Heart right ventricle (tissue), 16 donors: ENCODE measurements at regions of chr6 and their contacts with region 1.

Region 1: DNA sequence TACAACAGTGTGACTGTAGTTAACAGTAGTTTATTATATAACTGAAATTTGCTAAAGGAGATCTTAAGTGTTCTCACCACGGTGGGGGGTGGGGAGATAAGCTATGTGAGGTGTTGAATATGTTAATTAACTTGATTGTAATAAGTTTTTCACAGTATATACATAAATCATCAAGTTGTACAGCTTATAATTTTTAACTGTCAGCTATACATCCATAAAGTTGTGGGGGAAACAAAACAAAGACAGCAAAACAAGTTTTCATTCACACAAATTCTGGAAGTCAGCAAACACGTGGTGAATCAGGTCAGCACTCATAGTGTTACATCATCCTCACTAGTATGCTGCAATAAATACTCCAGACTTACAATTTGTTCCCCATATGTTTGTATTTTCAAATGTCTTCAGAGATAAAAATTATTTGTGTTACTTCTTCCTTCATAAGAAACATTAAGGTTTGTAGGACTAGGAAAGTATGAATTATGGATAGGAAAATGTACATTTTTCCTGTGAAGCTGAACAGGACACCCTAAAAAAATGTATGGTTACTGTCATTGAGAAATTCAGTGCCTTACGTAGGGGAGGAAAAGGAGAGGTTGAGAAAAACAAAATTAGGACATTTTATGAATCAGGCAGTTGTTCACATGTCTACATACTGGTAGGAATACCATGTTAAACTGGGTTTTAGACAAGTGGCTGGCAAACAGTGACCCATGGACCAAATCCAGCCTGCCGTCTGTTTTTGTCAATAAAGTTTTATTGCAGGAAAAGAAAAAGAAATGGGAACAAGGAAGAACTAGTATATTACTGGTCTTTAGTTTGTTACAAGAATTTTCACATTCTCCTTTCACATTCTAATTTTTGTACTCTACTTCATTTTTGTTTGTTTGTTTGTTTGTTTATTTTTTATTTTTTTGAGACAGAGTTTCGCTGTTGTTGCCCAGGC is 6.0 kb downstream of the SUMO4 start:
- DNase-seq: no peak
- ATAC-seq: no peak
- H3K4me3 ChIP-seq: no peak overlapping the region
- H3K27ac ChIP-seq: peak overlapping the region in 1 of 10 donors; percentile 3
- H3K4me1 ChIP-seq: peaks cover 0 to 20% (median 6%) of the 10 kb centered on the region in 9 donors
- H3K27me3 ChIP-seq: no peaks in the 10 kb centered on the region
- CTCF ChIP-seq: no peak

Region 2: GRCh38 chr6:149190224-149190831 is 215.8 kb before region 1 on chr6:
- intact Hi-C with region 1: loop called in 1 of 10 experiments (anchors 10 kb)
- DNase-seq: no peak
- ATAC-seq: no peak
- H3K4me3 ChIP-seq: no peak overlapping the region
- H3K27ac ChIP-seq: no peak overlapping the region
- H3K4me1 ChIP-seq: peaks cover 0 to 4% (median 0%) of the 10 kb centered on the region in 9 donors
- H3K27me3 ChIP-seq: peaks cover 0 to 11% (median 0%) of the 10 kb centered on the region in 7 donors
- CTCF ChIP-seq: peak in 3 of 9 donors; percentile 9 to 39 (median 12)

Region 3: DNA sequence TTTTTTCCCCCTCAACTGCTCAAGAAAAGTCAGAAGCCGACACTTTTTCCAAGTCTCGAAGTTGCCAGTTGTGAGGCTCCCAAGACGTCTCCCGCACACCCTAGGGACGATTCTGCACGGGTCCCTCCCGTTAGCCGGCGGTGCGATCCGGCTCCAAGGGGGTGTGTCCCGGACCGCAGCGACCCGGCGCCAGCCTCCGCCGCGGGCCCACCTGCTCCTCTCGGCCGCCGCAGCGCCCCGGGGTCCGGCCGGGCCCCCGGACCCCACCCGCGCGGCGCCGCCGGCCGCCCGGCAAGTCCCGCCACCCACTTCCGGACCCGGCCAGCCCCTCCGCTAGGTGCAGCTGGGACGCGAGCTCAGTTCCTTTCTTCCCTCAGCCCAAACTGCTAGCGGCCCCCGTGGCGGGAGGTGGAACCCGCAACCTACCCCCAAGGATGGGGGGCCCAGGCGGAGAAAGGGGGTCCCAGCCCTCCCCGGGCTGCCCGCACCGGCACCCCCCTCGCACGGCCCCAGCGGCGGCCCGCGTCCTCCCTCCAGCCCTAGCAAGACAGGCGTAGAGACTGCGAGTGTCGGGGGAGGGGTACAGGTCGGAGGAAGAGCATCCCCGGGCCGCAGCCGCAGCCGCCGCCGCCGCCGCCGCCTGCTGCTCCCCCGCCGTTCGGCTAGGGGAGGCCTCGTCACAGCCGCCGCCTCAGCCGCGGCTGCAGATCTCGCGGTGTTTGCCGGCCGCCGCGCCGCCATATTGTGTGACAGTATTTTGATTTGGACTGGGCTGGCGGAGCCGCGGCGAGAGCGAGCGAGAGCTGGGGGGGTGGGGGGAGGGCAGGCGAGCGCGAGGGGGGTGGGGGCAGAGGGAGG is 89.1 kb before region 1 on chr6:
- intact Hi-C with region 1: loop called in 4 of 10 experiments (anchors 2 to 10 kb)
- DNase-seq: peak; percentile 90
- ATAC-seq: peak; percentile 95 to 97 (median 96)
- H3K4me3 ChIP-seq: peak overlapping the region; percentile 89 to 99 (median 93)
- H3K27ac ChIP-seq: peak overlapping the region; percentile 93 to 99 (median 97)
- H3K4me1 ChIP-seq: peaks cover 0 to 44% (median 26%) of the 10 kb centered on the region in 9 donors
- H3K27me3 ChIP-seq: peaks cover 0 to 11% (median 0%) of the 10 kb centered on the region in 7 donors
- CTCF ChIP-seq: no peak

Region 4: DNA sequence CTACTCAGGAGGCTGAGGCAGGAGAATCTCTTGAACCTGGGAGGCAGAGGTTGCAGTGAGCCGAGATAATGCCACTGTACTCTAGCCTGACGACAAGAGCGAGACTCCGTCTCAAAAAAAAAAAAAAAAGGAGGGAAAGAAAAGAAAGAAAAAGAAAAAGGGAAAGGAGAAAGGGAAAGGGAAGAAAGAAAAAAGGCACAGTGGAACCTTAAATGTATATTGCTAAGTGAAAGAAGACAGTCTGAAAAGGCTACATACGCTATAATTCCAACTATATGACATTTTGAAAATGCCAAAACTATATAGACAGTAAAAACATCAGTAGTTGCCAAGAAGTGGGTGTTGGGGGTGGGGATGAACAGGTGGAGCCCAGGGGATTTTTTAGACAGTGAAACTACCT is 123.6 kb after region 1 on chr6:
- intact Hi-C with region 1: no loop called
- DNase-seq: no peak
- ATAC-seq: no peak
- H3K4me3 ChIP-seq: no peak overlapping the region
- H3K27ac ChIP-seq: no peak overlapping the region
- H3K4me1 ChIP-seq: no peaks in the 10 kb centered on the region
- H3K27me3 ChIP-seq: no peaks in the 10 kb centered on the region
- CTCF ChIP-seq: no peak